CD8-positive, alpha-beta T cell (primary cell): ENCODE measurements at regions of chr16 and their contacts with region 1.

Region 1: GRCh38 chr16:4616047-4616811 is 1.5 kb upstream of the UBALD1 start:
- DNase-seq: peak; percentile 96 to 100 (median 98)
- ATAC-seq: peak; percentile 90
- H3K4me3 ChIP-seq: peak overlapping the region; percentile 67 to 97
- H3K4me3 Mint-ChIP-seq: peak overlapping the region; percentile 96
- H3K27ac ChIP-seq: peak overlapping the region; percentile 96 to 98
- H3K27ac Mint-ChIP-seq: peak overlapping the region; percentile 99
- H3K4me1 ChIP-seq: peaks cover 49% of the 10 kb centered on the region
- H3K4me1 Mint-ChIP-seq: peaks cover 41% of the 10 kb centered on the region
- H3K27me3 ChIP-seq: no peaks in the 10 kb centered on the region
- H3K27me3 Mint-ChIP-seq: no peaks in the 10 kb centered on the region
- CTCF ChIP-seq: no peak

Region 2: DNA sequence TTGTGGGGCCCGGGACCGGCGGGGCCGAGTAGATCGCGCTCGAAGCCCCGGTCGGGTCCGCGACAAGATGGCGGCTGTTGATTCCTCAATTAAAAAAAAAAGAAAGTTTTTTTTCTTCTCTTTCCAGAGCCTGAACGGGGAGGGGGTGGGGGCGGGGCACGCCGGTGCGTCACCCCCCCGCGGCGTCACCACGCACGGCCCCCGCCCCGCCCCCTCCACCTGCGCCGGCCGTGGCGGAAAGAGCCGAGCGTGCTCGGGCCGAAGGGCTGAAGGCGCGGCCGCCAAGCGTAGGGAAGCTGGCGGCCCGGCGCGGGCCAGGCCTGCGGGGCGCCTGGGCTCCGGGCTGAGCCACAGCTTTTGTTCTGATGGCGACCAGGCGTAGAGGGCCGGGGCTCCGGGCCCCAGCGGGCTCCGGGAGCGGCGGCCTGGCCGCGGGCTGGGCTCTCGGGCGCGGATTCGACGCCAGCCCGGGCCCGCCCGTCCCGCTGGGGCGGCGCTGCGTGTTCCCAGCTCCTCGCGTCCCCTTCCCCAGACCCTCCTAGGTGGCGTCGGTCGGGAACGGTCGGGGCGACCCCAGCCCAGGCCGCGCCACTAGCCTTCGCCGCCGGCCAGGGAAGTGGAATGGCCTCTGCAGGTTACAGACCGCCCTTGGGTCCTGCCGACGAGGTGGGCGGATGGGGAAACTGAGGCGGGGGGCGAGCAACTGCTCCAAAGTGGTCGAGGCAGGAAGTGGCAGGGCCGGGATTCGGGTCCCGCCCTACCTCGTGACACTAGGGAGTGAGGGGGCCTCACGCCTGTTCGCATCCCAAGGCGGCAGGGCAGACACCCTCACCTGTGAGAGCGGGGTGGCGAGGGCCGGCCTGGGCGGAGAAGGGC is 735.4 kb before region 1 on chr16 and contains the start of gene CREBBP:
- CTCF ChIA-PET with region 1: no interaction called
- POLR2A ChIA-PET with region 1: no interaction called
- intact Hi-C with region 1: loop called in 1 of 2 experiments (anchors 5 kb)
- DNase-seq: peak; percentile 80 to 95 (median 87)
- ATAC-seq: peak; percentile 84
- H3K4me3 ChIP-seq: peak within 1 kb of the TSS; percentile 70 to 80
- H3K4me3 Mint-ChIP-seq: peak within 1 kb of the TSS; percentile 88
- H3K27ac ChIP-seq: peak within 1 kb of the TSS in 1 of 2 experiments; percentile 71
- H3K27ac Mint-ChIP-seq: peak within 1 kb of the TSS; percentile 94
- H3K4me1 ChIP-seq: peaks cover 32% of the 10 kb centered on the region
- H3K4me1 Mint-ChIP-seq: peaks cover 38% of the 10 kb centered on the region
- H3K27me3 ChIP-seq: no peaks in the 10 kb centered on the region
- H3K27me3 Mint-ChIP-seq: peaks cover 2% of the 10 kb centered on the region
- CTCF ChIP-seq: no peak
- total RNA-seq, gene CREBBP: 186 to 189 TPM

Region 3: DNA sequence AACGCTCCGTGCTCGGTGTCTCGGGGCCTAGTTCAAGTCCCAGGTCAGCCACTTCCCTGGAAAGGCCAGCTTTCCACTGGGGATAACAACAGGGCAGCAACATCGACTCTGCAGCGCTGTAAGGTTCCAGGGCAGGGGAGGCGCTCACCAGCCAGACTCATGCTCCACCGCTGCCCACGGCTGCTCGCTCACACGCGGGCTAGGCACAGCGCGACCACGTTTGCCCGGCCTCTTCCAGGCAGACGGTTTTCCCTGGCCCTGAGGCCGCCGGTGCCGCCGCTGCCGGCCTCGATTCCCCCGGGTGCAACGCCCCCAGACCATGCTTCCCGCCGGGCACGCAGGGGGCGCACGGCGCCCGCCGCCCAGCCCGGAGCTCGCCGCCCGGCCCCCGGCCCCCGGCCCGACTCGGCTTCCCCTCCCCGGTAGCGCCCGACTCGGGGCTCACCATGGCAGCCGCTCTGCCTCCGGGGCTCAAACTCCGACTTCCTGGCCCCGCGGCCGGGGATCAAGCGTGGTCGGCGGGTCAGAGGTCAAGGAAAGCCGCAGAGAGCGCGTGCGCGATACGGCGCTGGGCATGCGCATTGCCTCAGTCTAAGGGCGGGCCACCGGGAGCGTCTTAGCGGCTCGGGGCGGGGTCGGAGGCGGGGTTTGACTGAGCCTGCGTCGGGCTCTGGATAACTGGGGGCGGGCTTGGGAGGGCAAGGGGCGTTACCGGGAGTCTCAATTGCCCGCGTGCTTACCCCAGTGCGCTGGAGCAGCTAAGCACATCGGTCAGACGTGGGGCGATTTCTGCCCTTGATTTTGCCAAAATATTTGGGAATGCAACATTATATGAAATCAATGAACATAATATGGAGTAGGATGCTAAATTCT is 265.2 kb before region 1 on chr16 and contains the start of gene PAM16:
- CTCF ChIA-PET with region 1: no interaction called
- POLR2A ChIA-PET with region 1: no interaction called
- intact Hi-C with region 1: loop called in 1 of 2 experiments (anchors 1 kb)
- DNase-seq: peak; percentile 93 to 99 (median 98)
- ATAC-seq: peak; percentile 89
- H3K4me3 ChIP-seq: peak within 1 kb of the TSS; percentile 92
- H3K4me3 Mint-ChIP-seq: peak within 1 kb of the TSS; percentile 93
- H3K27ac ChIP-seq: peak within 1 kb of the TSS; percentile 80 to 82
- H3K27ac Mint-ChIP-seq: peak within 1 kb of the TSS; percentile 90
- H3K4me1 ChIP-seq: peaks cover 16% of the 10 kb centered on the region
- H3K4me1 Mint-ChIP-seq: peaks cover 42% of the 10 kb centered on the region
- H3K27me3 ChIP-seq: no peaks in the 10 kb centered on the region
- H3K27me3 Mint-ChIP-seq: no peaks in the 10 kb centered on the region
- CTCF ChIP-seq: no peak
- total RNA-seq, gene PAM16: 30.9 to 31.4 TPM

Region 4: GRCh38 chr16:4475880-4476788 is 140.1 kb before region 1 on chr16 and contains the start of gene HMOX2:
- CTCF ChIA-PET with region 1: no interaction called
- POLR2A ChIA-PET with region 1: interaction called, 5 read pairs
- intact Hi-C with region 1: loop called (anchors 2 to 10 kb)
- DNase-seq: peak; percentile 86 to 98 (median 93)
- ATAC-seq: peak; percentile 83
- H3K4me3 ChIP-seq: peak within 1 kb of the TSS; percentile 85 to 98
- H3K4me3 Mint-ChIP-seq: peak within 1 kb of the TSS; percentile 90
- H3K27ac ChIP-seq: peak within 1 kb of the TSS; percentile 72 to 85
- H3K27ac Mint-ChIP-seq: peak within 1 kb of the TSS; percentile 92
- H3K4me1 ChIP-seq: peaks cover 38% of the 10 kb centered on the region
- H3K4me1 Mint-ChIP-seq: peaks cover 46% of the 10 kb centered on the region
- H3K27me3 ChIP-seq: no peaks in the 10 kb centered on the region
- H3K27me3 Mint-ChIP-seq: no peaks in the 10 kb centered on the region
- CTCF ChIP-seq: no peak
- total RNA-seq, gene HMOX2: 31.7 to 36.4 TPM

Region 5: DNA sequence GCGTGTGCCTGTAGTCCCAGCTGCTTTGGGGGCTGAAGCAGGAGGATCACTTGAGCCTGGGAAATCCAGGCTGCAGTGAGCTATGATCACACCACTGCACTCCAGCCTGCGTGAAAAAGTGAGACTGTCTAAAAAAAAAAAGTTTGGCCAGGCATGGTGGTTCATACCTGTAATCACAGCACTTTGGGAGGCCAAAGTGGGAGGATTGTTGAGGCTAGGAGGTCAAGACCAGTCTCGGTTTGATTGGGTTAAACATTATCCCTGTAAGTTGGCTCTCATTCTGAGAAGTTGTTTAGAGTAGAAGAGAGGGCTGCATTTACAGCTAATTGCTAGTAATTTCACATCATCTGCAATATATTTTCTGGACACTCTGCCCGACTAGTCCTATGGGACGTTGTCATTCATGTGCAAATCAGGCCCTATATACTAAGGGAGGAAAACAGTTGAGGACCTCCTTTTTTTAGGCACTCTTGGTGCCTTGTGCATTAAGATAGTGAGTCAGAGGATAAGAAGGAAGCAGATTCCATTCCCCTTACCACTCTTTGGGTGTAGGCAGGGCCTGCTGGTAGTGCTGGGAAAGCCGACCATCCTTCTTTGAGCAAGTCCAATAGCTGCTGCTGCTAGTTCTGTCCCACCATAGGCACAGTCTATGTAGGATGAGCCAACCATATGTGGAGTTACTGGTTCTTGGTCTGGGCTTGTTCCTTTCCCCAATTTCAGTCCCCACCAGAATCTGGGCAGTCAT is 121.3 kb before region 1 on chr16:
- CTCF ChIA-PET with region 1: no interaction called
- POLR2A ChIA-PET with region 1: no interaction called
- intact Hi-C with region 1: no loop called
- DNase-seq: no peak
- ATAC-seq: no peak
- H3K4me3 ChIP-seq: no peak overlapping the region
- H3K4me3 Mint-ChIP-seq: no peak overlapping the region
- H3K27ac ChIP-seq: peak overlapping the region in 1 of 2 experiments; percentile 38
- H3K27ac Mint-ChIP-seq: peak overlapping the region; percentile 77
- H3K4me1 ChIP-seq: peaks cover 86% of the 10 kb centered on the region
- H3K4me1 Mint-ChIP-seq: peaks cover 88% of the 10 kb centered on the region
- H3K27me3 ChIP-seq: no peaks in the 10 kb centered on the region
- H3K27me3 Mint-ChIP-seq: no peaks in the 10 kb centered on the region
- CTCF ChIP-seq: no peak

Region 6: DNA sequence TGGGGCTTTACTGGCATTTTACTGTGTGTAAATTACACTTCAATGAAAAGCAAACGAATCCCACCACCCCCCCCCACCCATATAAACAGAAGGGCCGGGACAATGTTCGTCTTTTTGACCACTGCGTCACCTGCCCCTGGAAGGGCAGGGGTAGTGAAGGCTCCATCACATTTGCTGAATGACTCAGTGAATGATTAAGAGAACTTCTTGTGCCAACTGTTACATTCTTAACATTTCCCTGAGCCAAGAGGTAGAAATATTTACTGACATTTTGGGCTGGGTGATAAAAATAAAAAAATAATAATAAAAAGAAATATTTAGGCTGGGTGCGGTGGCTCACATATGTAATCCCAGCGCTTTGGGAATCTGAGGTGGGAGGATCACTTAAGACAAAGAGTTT is 36.0 kb before region 1 on chr16:
- CTCF ChIA-PET with region 1: no interaction called
- POLR2A ChIA-PET with region 1: no interaction called
- intact Hi-C with region 1: no loop called
- DNase-seq: no peak
- ATAC-seq: no peak
- H3K4me3 ChIP-seq: no peak overlapping the region
- H3K4me3 Mint-ChIP-seq: no peak overlapping the region
- H3K27ac ChIP-seq: no peak overlapping the region
- H3K27ac Mint-ChIP-seq: no peak overlapping the region
- H3K4me1 ChIP-seq: peaks cover 1% of the 10 kb centered on the region
- H3K4me1 Mint-ChIP-seq: no peaks in the 10 kb centered on the region
- H3K27me3 ChIP-seq: no peaks in the 10 kb centered on the region
- H3K27me3 Mint-ChIP-seq: no peaks in the 10 kb centered on the region
- CTCF ChIP-seq: no peak

Region 7: GRCh38 chr16:4693296-4693955 is 77.2 kb after region 1 on chr16 and contains the start of gene NUDT16L1:
- CTCF ChIA-PET with region 1: no interaction called
- POLR2A ChIA-PET with region 1: interaction called, 13 read pairs
- intact Hi-C with region 1: loop called (anchors 1 kb)
- DNase-seq: peak; percentile 94 to 99 (median 97)
- ATAC-seq: peak; percentile 90
- H3K4me3 ChIP-seq: peak within 1 kb of the TSS; percentile 85 to 97
- H3K4me3 Mint-ChIP-seq: peak within 1 kb of the TSS; percentile 88
- H3K27ac ChIP-seq: peak within 1 kb of the TSS; percentile 68 to 93
- H3K27ac Mint-ChIP-seq: peak within 1 kb of the TSS; percentile 89
- H3K4me1 ChIP-seq: peaks cover 30% of the 10 kb centered on the region
- H3K4me1 Mint-ChIP-seq: peaks cover 13% of the 10 kb centered on the region
- H3K27me3 ChIP-seq: no peaks in the 10 kb centered on the region
- H3K27me3 Mint-ChIP-seq: no peaks in the 10 kb centered on the region
- CTCF ChIP-seq: no peak
- total RNA-seq, gene NUDT16L1: 72.9 to 76.5 TPM

Region 8: DNA sequence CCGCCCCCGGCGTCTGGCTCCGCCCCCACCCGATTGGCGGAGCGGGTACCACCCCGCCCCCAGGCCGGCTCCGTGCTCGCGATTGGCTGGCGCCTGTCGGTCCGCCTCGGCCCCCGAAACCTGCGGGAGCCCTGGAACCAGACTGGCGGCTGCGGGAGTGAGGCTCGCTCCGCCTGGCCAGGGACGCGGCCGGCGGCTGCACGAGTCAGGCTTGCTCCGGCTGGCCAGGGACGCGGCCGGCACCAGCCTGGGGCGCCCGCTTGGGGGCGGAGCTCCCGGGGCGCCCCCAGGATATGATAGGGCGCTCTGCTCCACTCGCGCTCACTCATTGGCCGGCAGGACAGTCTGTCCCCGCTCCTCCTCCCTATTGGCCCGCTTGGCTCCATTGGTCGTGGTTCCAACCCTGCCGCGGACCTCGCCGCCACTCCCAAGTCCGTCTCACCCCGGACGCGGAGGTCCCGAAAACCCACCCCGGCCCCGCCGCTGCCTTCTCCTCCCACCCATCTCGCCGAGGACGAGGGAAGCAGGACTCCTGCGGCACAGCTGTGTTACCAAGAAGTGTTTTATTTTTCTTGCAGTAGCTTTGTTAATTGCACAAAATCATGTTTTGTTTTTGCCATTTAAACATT is 186.5 kb after region 1 on chr16:
- CTCF ChIA-PET with region 1: no interaction called
- POLR2A ChIA-PET with region 1: interaction called, 6 read pairs
- intact Hi-C with region 1: loop called in 1 of 2 experiments (anchors 1 kb)
- DNase-seq: peak; percentile 79 to 95 (median 88)
- ATAC-seq: peak; percentile 86
- H3K4me3 ChIP-seq: peak overlapping the region; percentile 60 to 89
- H3K4me3 Mint-ChIP-seq: peak overlapping the region; percentile 87
- H3K27ac ChIP-seq: peak overlapping the region; percentile 25 to 77
- H3K27ac Mint-ChIP-seq: peak overlapping the region; percentile 74
- H3K4me1 ChIP-seq: peaks cover 14% of the 10 kb centered on the region
- H3K4me1 Mint-ChIP-seq: peaks cover 11% of the 10 kb centered on the region
- H3K27me3 ChIP-seq: no peaks in the 10 kb centered on the region
- H3K27me3 Mint-ChIP-seq: no peaks in the 10 kb centered on the region
- CTCF ChIP-seq: no peak